ENCODE measurements at regions of chr7 and their contacts with region 1.

Region 1: DNA sequence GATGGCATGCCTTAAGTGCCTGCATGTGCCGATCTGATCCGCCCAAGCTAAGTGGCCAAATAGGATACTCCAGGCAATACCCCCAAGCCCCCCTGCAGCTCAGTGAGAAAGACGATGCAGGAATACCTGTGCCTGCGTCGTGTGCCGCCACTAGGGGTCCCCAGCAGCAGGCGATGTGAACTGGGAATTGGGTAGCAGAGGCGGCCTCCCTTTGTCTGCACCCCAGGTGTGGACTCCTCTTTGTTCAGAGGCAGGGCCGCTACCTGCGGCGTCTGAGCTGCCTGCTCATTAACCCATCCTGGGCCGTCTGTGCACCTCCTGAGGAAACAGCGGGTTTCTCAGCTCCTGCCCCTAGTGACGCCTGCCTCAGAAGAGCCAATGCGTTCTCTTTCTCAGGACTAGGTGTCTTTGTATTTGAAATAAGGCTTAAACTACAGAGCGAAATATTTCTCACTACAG is 4.8 kb upstream of the CHN2 start:
- DNase-seq: peak; percentile 69
- ATAC-seq: peak; percentile 74
- H3K4me3 Mint-ChIP-seq: no peak overlapping the region
- H3K27ac Mint-ChIP-seq: no peak overlapping the region
- H3K4me1 Mint-ChIP-seq: no peaks in the 10 kb centered on the region
- H3K27me3 Mint-ChIP-seq: peaks cover 47% of the 10 kb centered on the region

Region 2: DNA sequence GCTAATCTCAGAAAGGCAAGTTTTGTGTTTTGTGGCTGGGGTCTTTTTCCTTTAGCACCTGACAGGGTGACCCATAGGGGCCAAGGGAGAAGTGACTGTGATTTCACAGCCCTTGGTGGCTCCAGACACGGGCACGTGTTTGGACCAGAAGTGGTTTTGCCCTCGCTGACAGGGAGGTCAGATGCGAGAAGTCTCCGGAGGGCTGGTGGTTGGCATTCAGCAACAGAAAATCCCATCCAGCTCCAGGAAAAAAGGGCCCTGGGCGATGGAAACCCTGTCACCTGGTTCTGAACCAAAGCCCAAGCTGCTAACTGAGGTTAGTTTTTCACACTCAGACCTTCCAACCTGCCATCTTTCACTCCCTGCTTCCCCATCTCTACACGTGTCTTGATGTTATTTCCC is 504.5 kb before region 1 on chr7:
- CTCF ChIA-PET with region 1: no interaction called
- DNase-seq: no peak
- ATAC-seq: no peak
- H3K4me3 Mint-ChIP-seq: no peak overlapping the region
- H3K27ac Mint-ChIP-seq: no peak overlapping the region
- H3K4me1 Mint-ChIP-seq: no peaks in the 10 kb centered on the region
- H3K27me3 Mint-ChIP-seq: peaks cover 10% of the 10 kb centered on the region

Region 3: GRCh38 chr7:29091715-29092114 is 98.1 kb before region 1 on chr7:
- CTCF ChIA-PET with region 1: no interaction called
- DNase-seq: no peak
- ATAC-seq: peak; percentile 91
- H3K4me3 Mint-ChIP-seq: peak overlapping the region; percentile 70
- H3K27ac Mint-ChIP-seq: peak overlapping the region; percentile 85
- H3K4me1 Mint-ChIP-seq: peaks cover 23% of the 10 kb centered on the region
- H3K27me3 Mint-ChIP-seq: peaks cover 18% of the 10 kb centered on the region

Region 4: DNA sequence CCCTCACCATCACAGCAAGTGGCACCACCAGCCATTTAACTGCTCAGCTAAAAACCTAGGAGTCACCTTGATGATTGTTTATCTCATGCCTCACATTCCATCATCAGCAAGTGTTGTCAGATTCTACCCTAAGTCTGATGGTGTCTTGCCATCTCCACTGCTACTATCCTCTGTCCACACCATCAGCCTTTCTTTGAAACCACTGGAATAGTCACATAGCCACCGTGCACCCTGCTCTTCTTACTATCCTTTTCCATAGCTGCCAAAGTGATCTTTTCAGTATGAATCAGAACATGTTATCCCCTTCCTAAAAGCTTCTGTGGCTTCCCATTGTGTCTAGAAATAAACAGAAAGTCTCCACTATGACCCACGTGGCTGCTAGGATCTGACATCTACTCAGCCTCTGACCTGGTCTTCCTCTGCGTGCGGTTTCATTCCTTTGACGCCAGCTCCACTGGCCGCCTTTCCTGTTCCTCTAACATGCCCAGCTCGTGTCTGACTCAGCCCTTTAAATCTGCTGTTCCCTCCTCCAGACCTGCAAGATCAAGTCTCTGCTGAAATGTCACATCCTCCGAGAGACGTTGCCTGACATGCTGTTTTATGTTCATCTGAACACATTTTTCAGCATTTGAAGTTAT is 11.7 kb before region 1 on chr7:
- CTCF ChIA-PET with region 1: interaction called, 17 read pairs
- DNase-seq: peak; percentile 50
- ATAC-seq: peak; percentile 55
- H3K4me3 Mint-ChIP-seq: no peak overlapping the region
- H3K27ac Mint-ChIP-seq: no peak overlapping the region
- H3K4me1 Mint-ChIP-seq: peaks cover 10% of the 10 kb centered on the region
- H3K27me3 Mint-ChIP-seq: peaks cover 19% of the 10 kb centered on the region

Region 5: GRCh38 chr7:29285444-29285793 is 95.6 kb after region 1 on chr7:
- CTCF ChIA-PET with region 1: interaction called, 14 read pairs
- DNase-seq: peak; percentile 81
- ATAC-seq: peak; percentile 75
- H3K4me3 Mint-ChIP-seq: peak overlapping the region; percentile 9
- H3K27ac Mint-ChIP-seq: peak overlapping the region; percentile 62
- H3K4me1 Mint-ChIP-seq: peaks cover 55% of the 10 kb centered on the region
- H3K27me3 Mint-ChIP-seq: peaks cover 63% of the 10 kb centered on the region

Region 6: GRCh38 chr7:29340429-29341095 is 150.8 kb after region 1 on chr7:
- CTCF ChIA-PET with region 1: interaction called, 25 read pairs
- DNase-seq: no peak
- ATAC-seq: no peak
- H3K4me3 Mint-ChIP-seq: no peak overlapping the region
- H3K27ac Mint-ChIP-seq: no peak overlapping the region
- H3K4me1 Mint-ChIP-seq: peaks cover 28% of the 10 kb centered on the region
- H3K27me3 Mint-ChIP-seq: no peaks in the 10 kb centered on the region

Region 7: DNA sequence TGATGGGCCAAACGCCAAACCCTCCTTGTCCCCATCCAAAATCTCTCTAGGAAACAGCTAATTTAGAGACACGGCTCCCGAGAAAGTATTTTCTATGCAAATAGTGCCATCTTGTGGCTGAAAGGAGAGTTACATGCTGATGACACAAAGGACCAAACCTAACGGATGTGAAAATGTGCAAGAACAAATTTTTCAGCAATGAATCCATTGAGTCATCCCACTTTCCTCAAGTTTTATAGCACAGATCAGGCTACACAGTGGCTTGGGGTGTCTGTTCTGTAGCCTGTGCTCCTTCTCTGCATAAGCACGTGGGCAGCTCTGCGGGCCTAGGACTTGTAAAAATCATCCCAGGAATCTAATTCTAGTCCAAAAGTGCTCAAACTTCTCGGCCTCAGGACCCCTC is 219.1 kb after region 1 on chr7:
- CTCF ChIA-PET with region 1: interaction called, 90 read pairs
- DNase-seq: peak; percentile 63
- ATAC-seq: peak; percentile 55
- H3K4me3 Mint-ChIP-seq: no peak overlapping the region
- H3K27ac Mint-ChIP-seq: no peak overlapping the region
- H3K4me1 Mint-ChIP-seq: peaks cover 2% of the 10 kb centered on the region
- H3K27me3 Mint-ChIP-seq: no peaks in the 10 kb centered on the region